Panc1 (cell line): ENCODE measurements at regions of chr17 and their contacts with region 1.

Region 1: DNA sequence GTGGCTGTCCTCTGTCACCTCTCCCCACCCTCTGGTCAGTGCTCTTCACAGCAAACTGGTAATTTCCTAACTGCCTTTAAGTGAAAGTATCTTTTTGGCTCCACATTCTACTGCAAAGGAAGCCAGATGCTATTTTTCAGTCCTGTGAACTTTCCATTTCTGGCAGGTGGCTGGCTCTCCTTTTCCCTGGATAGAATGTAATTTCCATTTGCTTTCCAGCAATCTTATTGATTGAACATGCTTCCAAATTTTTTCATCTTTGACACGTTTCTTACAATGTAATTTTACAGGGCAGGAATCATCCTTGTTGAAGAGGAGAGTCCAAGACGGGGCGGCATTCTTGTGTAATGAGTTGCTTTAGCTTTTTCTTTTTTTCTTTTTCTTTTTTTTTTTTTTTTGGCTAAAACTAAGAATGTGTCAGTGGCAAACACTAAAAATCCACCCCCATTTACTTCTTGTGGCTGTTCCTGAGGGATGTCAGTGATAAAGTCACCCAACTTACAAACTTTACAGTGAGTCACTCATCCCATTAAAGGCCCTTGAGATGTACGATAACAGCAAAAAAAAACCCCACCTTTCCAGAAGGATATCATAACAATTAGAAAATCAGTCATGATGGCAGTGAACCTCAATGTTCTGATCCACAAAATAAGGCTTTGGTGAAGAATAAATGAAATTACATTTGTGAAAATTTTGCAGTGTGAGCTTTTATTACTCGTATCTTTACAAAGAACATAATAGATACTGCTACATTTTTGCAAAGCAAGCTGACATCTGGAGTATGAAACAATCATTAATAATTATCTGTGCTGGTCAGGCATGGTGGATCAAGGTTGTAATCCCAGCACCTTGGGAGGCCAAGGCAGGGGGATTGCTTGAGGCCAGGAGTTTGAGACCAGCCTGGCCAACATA is 29.3 kb upstream of the PRKCA start:
- DNase-seq: no peak
- ATAC-seq: peak; percentile 50
- H3K4me3 ChIP-seq: peak overlapping the region; percentile 4 to 29; a peak in 3 of 4 replicates
- H3K27ac ChIP-seq: peak overlapping the region; percentile 78
- H3K4me1 ChIP-seq: peaks cover 33% of the 10 kb centered on the region
- H3K27me3 ChIP-seq: no peaks in the 10 kb centered on the region
- CTCF ChIP-seq: no peak

Region 2: GRCh38 chr17:65914784-65915350 is 358.2 kb before region 1 on chr17:
- CTCF ChIA-PET with region 1: no interaction called
- POLR2A ChIA-PET with region 1: interaction called, 14 read pairs
- in situ Hi-C with region 1: no loop called
- intact Hi-C with region 1: no loop called
- DNase-seq: no peak
- ATAC-seq: no peak
- H3K4me3 ChIP-seq: no peak overlapping the region
- H3K27ac ChIP-seq: no peak overlapping the region
- H3K4me1 ChIP-seq: no peaks in the 10 kb centered on the region
- H3K27me3 ChIP-seq: no peaks in the 10 kb centered on the region
- CTCF ChIP-seq: no peak

Region 3: DNA sequence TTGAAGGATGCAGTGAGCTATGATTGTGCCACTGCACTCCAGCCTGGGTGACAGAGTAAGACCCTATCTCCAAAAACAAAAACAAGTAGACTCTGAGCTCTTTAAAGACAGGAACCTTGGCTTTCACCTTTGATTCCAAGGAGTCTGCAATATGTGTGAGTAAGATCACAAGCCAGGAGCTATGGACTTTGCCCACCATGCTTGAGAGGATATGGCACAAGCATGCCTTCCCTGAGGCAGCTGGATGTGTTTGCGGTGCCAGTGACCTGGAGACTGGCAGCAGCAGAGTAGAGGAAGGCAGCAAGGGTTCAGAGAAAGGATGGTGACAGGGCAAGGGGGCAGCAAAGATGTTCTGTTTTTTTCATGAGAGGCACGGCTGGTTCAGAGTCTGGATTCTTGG is 14.8 kb after region 1 on chr17:
- CTCF ChIA-PET with region 1: no interaction called
- POLR2A ChIA-PET with region 1: no interaction called
- in situ Hi-C with region 1: no loop called
- intact Hi-C with region 1: no loop called
- DNase-seq: no peak
- ATAC-seq: no peak
- H3K4me3 ChIP-seq: no peak overlapping the region
- H3K27ac ChIP-seq: no peak overlapping the region
- H3K4me1 ChIP-seq: no peaks in the 10 kb centered on the region
- H3K27me3 ChIP-seq: no peaks in the 10 kb centered on the region
- CTCF ChIP-seq: no peak